Activated B cell treated with CpG ODN at 0.5 μM for 24 hours (primary cell): ENCODE measurements at regions of chr10 and their contacts with region 1.

Region 1: GRCh38 chr10:28381903-28382347 is 79.1 kb upstream of the MPP7 start:
- DNase-seq: peak; percentile 45
- ATAC-seq: peak; percentile 93
- H3K4me3 Mint-ChIP-seq: no peak overlapping the region
- H3K27ac Mint-ChIP-seq: no peak overlapping the region
- H3K4me1 Mint-ChIP-seq: peaks cover 6% of the 10 kb centered on the region
- H3K27me3 Mint-ChIP-seq: peaks cover 5% of the 10 kb centered on the region
- CTCF ChIP-seq: peak; percentile 66

Region 2: DNA sequence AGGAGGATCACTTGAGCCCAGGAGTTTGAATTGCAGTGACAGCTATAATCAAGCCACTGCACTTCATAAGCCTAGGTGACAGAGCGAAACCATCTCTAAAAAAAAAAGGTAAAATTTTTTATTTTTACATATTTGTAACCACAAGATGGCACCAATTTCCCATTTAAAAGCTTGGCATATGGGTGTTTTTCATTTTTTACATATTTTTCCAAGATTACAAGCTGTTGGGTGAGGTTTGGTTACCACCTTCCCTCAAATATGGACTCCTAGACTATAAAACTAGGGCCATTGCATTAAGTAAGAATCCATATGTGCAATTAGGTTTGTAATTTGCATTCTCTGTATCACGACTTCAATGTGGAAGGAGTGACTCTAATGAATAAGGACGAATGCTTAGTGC is 1012.0 kb before region 1 on chr10:
- CTCF ChIA-PET with region 1: no interaction called
- POLR2A ChIA-PET with region 1: no interaction called
- intact Hi-C with region 1: loop called (anchors 1 kb)
- DNase-seq: no peak
- ATAC-seq: no peak
- H3K4me3 Mint-ChIP-seq: no peak overlapping the region
- H3K27ac Mint-ChIP-seq: no peak overlapping the region
- H3K4me1 Mint-ChIP-seq: peaks cover 14% of the 10 kb centered on the region
- H3K27me3 Mint-ChIP-seq: peaks cover 2% of the 10 kb centered on the region
- CTCF ChIP-seq: no peak

Region 3: DNA sequence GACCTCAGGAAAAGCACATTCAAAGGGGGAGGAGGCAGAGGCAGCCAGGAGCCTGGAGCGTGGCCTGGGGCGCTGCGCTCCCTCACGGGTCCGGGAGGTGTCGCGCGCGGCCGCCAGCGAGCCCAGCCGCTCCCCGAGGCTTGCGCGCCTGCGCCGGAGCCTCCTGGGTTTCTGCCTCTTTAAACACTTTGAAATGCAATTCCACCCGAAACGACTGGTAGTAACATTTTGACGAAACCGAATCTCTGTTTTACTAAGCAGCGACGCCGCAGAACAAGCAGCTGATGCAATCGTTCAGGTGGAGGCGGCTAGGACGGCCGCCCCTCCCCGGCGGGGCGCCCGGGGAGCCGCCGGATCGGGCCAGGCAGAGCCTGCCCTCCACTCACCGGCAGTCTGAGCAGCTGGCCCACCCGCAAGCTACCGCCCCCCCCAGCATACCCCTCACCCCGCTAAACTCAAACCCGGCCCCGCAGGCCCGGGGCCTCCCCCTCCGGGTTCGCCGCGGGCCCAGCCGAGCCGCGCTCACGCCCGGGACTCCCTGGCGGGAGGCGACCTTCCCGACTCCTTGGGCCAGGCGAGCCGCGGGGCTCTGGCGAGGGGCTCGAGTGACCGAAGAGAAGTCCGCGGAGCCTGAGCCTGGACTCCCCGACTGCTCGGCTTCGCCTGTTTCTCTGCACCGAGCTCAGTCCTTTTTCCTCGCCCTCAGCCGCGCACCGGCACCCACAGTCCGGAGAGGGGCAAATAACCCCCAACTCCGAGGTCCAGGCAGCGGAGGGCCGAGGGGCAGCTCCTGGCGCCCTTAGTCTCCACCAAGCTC is 639.5 kb before region 1 on chr10:
- CTCF ChIA-PET with region 1: interaction called, 7 read pairs
- POLR2A ChIA-PET with region 1: no interaction called
- intact Hi-C with region 1: loop called (anchors 1 kb)
- DNase-seq: peak; percentile 66
- ATAC-seq: peak; percentile 91
- H3K4me3 Mint-ChIP-seq: peak overlapping the region; percentile 76
- H3K27ac Mint-ChIP-seq: no peak overlapping the region
- H3K4me1 Mint-ChIP-seq: peaks cover 24% of the 10 kb centered on the region
- H3K27me3 Mint-ChIP-seq: peaks cover 60% of the 10 kb centered on the region
- CTCF ChIP-seq: no peak

Region 4: DNA sequence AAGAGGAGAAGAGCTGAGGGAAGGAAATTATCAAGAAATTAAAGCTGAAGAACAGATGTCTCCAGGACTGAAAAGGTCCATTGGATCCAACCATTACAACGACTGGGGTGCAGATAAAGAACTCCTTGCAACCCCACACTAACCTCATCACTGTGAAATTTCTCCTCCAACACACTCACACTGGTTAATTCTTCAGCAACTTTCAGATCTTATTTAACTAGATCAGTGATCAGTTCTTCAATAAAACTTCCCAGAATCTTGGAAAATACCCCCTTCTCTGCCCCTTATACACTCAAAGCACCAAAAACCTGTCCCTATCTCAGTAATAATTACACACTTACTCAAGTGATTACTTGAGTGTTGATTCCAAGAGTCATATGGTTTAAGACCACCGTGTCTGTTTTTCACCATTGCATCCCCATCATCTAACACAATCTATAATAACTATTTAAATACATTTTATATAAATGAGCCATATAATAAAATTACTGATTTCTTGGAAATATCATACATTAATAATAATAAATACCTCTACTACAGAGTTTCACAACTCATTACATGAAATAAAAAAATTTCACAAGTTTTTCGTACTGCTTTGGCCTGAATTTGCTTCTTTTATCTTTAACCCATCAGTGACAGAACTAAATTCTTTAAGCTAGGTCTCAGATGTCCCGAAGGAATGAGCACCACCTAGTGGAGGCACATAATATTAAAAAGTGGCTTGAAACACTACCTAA is 202.8 kb before region 1 on chr10:
- CTCF ChIA-PET with region 1: interaction called, 4 read pairs
- POLR2A ChIA-PET with region 1: no interaction called
- intact Hi-C with region 1: loop called (anchors 1 kb)
- DNase-seq: no peak
- ATAC-seq: peak; percentile 64
- H3K4me3 Mint-ChIP-seq: no peak overlapping the region
- H3K27ac Mint-ChIP-seq: no peak overlapping the region
- H3K4me1 Mint-ChIP-seq: peaks cover 15% of the 10 kb centered on the region
- H3K27me3 Mint-ChIP-seq: no peaks in the 10 kb centered on the region
- CTCF ChIP-seq: peak; percentile 88

Region 5: GRCh38 chr10:28302638-28303488 is 79.1 kb before region 1 on chr10 and contains the start of gene MPP7:
- CTCF ChIA-PET with region 1: interaction called, 87 read pairs
- POLR2A ChIA-PET with region 1: interaction called, 17 read pairs
- intact Hi-C with region 1: loop called (anchors 1 kb)
- DNase-seq: peak; percentile 96
- ATAC-seq: peak; percentile 91
- H3K4me3 Mint-ChIP-seq: peak within 1 kb of the TSS; percentile 91
- H3K27ac Mint-ChIP-seq: peak within 1 kb of the TSS; percentile 73
- H3K4me1 Mint-ChIP-seq: peaks cover 30% of the 10 kb centered on the region
- H3K27me3 Mint-ChIP-seq: peaks cover 35% of the 10 kb centered on the region
- CTCF ChIP-seq: no peak
- total RNA-seq, gene MPP7: 6.2 and 8.3 TPM in 2 replicates

Region 6: DNA sequence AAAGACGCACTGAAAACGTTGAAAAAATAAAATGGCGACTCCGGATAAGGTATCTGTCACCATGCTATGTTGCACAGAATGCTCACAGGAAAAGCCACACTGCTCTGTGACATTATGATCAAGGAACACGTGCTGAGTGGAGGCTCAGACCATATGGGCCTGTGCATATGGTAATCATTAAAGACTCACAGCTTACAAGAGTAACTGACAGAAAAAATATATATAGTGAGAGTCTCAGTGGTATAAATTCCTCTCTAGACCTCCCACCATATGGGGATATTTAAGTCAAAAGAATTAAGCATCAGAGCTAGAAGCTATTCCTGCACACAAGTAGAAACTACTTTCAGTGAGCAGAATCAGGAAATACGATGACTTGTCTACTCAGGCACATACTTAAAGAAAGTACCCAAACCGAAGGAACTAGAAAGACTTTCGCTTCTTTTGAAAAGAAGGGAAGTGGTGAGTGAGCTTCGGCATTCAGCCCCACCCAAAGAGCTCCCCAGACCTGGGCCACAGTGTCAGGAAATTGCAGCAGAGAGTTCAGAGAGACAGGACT is 13.9 kb before region 1 on chr10:
- CTCF ChIA-PET with region 1: interaction called, 32 read pairs
- POLR2A ChIA-PET with region 1: interaction called, 7 read pairs
- intact Hi-C with region 1: loop called (anchors 1 kb)
- DNase-seq: peak; percentile 20
- ATAC-seq: peak; percentile 98
- H3K4me3 Mint-ChIP-seq: peak overlapping the region; percentile 70
- H3K27ac Mint-ChIP-seq: peak overlapping the region; percentile 95
- H3K4me1 Mint-ChIP-seq: peaks cover 41% of the 10 kb centered on the region
- H3K27me3 Mint-ChIP-seq: no peaks in the 10 kb centered on the region
- CTCF ChIP-seq: no peak

Region 7: DNA sequence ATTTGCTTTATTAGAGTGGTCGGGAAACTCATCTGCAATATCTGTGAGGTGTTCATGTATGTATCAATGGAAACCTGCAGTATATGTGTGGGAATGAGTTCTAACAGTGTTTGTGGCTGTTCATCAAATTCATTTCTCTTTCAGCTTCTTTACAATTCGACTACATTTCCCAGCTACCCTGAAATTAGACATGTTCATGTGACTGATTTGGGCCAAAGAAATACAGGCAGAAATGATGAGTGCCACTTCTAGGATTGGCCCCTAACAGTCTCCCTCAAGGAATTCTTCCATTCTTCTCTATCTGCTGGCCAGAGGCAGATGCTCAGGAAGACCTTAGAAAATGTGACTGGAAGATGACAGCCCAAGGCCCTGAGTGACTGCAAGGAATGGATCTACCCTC is 36.1 kb after region 1 on chr10:
- CTCF ChIA-PET with region 1: no interaction called
- POLR2A ChIA-PET with region 1: no interaction called
- intact Hi-C with region 1: no loop called
- DNase-seq: no peak
- ATAC-seq: no peak
- H3K4me3 Mint-ChIP-seq: no peak overlapping the region
- H3K27ac Mint-ChIP-seq: no peak overlapping the region
- H3K4me1 Mint-ChIP-seq: no peaks in the 10 kb centered on the region
- H3K27me3 Mint-ChIP-seq: peaks cover 7% of the 10 kb centered on the region
- CTCF ChIP-seq: no peak

Region 8: GRCh38 chr10:28432210-28432676 is 50.3 kb after region 1 on chr10:
- CTCF ChIA-PET with region 1: no interaction called
- POLR2A ChIA-PET with region 1: no interaction called
- intact Hi-C with region 1: no loop called
- DNase-seq: no peak
- ATAC-seq: peak; percentile 58
- H3K4me3 Mint-ChIP-seq: peak overlapping the region; percentile 66
- H3K27ac Mint-ChIP-seq: no peak overlapping the region
- H3K4me1 Mint-ChIP-seq: peaks cover 6% of the 10 kb centered on the region
- H3K27me3 Mint-ChIP-seq: no peaks in the 10 kb centered on the region
- CTCF ChIP-seq: peak; percentile 75

Region 9: DNA sequence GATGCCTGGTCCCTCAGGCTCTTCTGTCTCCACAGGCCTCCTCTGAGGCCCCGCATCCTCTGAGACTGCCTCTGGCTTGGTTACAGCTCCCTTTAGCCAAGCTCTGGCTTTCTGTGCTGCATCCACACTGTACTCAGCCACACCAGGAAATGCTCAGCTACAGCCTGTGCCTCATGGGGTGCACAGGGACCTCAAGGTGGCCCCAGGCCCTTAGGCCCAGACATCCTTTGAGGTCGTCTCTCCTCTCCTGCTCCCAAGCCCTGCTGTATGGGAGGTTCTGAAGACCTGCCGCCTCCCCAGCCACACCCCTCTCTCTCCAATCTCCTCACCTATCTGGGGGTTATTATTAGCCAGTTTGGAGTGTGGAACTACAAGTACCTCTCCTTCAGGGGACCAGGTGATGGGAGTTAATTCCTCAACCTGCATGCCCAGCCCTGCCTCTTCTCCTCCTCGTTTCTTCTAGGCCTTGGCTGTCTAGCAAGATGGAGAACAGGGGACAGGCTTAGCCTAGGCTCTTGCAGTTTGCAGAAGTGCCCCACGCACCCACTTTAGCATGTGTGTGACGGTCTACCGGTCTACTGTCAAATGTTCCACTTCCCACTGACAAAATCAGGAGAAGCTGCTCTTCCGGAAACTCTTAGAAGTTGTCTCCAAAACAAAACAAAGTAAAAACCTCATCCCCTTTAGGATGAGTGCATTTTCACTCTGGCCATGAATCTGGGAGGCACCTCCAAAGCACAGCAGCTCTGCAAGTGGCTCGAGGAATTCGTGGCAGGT is 87.0 kb after region 1 on chr10:
- CTCF ChIA-PET with region 1: no interaction called
- POLR2A ChIA-PET with region 1: no interaction called
- intact Hi-C with region 1: no loop called
- DNase-seq: no peak
- ATAC-seq: no peak
- H3K4me3 Mint-ChIP-seq: no peak overlapping the region
- H3K27ac Mint-ChIP-seq: no peak overlapping the region
- H3K4me1 Mint-ChIP-seq: no peaks in the 10 kb centered on the region
- H3K27me3 Mint-ChIP-seq: peaks cover 2% of the 10 kb centered on the region
- CTCF ChIP-seq: no peak

Region 10: DNA sequence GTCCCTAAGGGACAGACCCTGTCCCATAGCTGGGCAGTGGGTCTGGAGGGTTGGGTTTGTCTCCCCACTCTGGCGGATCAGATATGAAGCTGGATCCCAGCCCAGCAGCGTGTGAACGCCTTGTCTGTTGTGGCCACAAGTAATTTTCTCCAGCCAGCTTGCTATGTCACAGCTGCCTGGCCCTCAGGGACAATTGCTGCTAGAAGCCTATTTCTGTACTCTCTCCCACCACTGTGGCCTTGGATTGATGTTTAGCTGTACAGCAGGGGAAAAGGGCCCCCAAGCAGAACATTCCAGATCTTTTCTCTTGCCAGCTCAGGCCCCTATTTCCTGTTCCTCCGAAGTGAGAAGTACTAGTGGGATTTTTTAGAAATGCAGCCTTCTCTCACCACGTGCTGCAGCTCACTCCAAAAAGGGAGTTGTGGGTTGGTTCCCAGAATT is 97.5 kb after region 1 on chr10:
- CTCF ChIA-PET with region 1: no interaction called
- POLR2A ChIA-PET with region 1: no interaction called
- intact Hi-C with region 1: no loop called
- DNase-seq: no peak
- ATAC-seq: no peak
- H3K4me3 Mint-ChIP-seq: no peak overlapping the region
- H3K27ac Mint-ChIP-seq: no peak overlapping the region
- H3K4me1 Mint-ChIP-seq: no peaks in the 10 kb centered on the region
- H3K27me3 Mint-ChIP-seq: peaks cover 7% of the 10 kb centered on the region
- CTCF ChIP-seq: no peak